ENCODE measurements at regions of chr21 and their contacts with region 1.

Region 1: GRCh38 chr21:41142051-41142795 is 25.7 kb upstream of the BACE2 start:
- DNase-seq: peak in 1 of 2 donors; percentile 65
- ATAC-seq: peak; percentile 67
- H3K4me3 ChIP-seq: no peak overlapping the region
- H3K27ac ChIP-seq: no peak overlapping the region
- H3K4me1 ChIP-seq: no peaks in the 10 kb centered on the region
- H3K27me3 ChIP-seq: no peaks in the 10 kb centered on the region

Region 2: DNA sequence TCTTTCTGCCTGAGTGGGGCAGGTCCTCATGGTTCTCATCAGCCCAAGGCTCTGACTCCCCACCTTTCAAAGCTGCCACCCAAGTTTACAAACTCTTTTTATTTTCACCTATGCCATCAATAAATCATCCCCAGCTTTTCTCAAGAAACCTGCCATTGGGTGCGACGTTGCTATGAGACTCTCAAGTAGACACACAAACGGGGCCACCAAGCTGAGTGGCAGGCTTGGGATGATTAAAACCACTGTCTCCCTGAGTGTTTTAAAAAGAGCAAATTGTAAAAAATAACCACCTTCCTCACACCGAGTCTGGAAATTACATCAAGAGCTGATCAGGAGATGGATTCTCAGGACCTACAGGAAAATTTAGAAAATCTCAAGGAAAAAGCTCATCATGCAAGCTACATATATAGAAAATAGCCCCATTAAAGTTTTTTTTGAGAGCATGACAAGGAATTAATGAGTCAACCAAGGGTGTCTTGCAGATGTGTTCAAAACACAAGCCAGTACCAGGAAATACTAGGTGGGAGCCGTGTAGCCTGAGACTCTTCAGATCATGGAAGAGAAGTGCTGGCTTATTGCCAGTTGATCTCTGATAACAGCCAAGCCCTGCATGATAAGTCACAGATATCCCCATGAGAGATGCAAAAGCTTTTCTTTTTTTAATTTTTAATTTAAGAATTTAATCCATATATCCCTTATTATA is 132.7 kb before region 1 on chr21:
- intact Hi-C with region 1: no loop called
- DNase-seq: no peak
- ATAC-seq: no peak
- H3K4me3 ChIP-seq: no peak overlapping the region
- H3K27ac ChIP-seq: no peak overlapping the region
- H3K4me1 ChIP-seq: no peaks in the 10 kb centered on the region
- H3K27me3 ChIP-seq: no peaks in the 10 kb centered on the region

Region 3: DNA sequence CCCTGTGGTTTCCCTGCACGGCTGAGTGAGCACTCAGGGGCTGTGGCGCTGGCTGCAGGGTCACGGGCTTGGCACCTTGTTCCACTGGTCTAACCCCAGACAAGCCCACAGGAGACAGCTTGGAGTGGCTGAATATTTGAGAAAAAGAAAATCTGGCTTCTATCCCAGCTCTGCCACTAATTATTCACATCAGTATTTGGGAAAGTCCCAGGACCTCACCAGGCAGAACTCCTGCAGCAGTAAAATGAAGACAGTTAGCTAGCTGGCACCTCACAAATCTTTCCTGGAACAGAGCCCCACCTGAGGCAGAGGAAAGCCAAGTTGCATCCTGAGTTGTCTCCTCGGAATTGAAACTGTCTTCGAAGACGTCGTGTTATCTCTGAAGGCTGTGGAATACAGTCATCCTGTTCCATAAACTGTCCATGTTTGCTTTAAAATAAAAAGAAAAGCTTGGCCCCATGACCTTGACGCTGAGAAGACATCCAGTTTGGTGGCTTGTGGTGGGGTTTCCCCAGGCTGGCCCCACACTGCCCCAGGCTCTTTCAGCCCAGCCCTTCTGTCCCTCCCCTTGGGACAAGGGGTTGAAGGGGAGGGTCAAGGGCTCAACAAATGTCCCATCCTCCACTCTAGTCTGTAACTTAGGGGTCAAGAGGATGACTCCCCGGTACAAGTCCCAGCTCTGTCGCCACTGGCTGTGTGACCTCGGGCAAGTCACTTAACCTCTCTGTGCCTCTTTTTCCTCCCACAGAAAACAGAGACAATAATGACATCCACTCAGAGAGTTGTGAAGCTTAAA is 459.5 kb after region 1 on chr21:
- intact Hi-C with region 1: loop called in 1 of 2 experiments (anchors 10 kb)
- DNase-seq: peak in 1 of 2 donors; percentile 64
- ATAC-seq: no peak
- H3K4me3 ChIP-seq: no peak overlapping the region
- H3K27ac ChIP-seq: no peak overlapping the region
- H3K4me1 ChIP-seq: no peaks in the 10 kb centered on the region
- H3K27me3 ChIP-seq: no peaks in the 10 kb centered on the region

Measured in aorta (tissue), 5 donors.